ENCODE measurements at regions of chr2 and their contacts with region 1.

Region 1: DNA sequence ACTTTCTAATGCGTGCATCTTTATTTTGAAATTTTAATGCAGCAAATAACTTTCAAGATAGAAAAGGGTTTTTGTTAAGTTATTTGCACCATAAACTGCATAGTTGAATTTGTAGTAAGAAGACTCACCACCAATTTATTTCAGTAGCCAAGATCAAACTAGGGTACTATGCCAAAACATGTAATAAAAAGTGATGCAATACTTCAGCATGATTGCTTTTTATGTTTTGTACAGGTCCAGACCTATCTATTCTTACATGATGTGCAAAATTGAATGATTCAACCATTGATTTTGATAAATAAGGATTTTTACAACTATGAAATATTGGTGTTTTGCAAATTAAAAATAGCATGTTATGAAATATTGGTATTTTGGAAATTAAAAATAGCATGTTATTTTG is 26.7 kb downstream of the AGPS start:
- DNase-seq: peak; percentile 80
- H3K4me3 ChIP-seq: peak overlapping the region in 1 of 3 experiments; percentile 37
- H3K27ac ChIP-seq: no peak overlapping the region
- H3K4me1 ChIP-seq: peaks cover 12% of the 10 kb centered on the region
- H3K27me3 ChIP-seq: no peaks in the 10 kb centered on the region
- CTCF ChIP-seq: no peak

Region 2: DNA sequence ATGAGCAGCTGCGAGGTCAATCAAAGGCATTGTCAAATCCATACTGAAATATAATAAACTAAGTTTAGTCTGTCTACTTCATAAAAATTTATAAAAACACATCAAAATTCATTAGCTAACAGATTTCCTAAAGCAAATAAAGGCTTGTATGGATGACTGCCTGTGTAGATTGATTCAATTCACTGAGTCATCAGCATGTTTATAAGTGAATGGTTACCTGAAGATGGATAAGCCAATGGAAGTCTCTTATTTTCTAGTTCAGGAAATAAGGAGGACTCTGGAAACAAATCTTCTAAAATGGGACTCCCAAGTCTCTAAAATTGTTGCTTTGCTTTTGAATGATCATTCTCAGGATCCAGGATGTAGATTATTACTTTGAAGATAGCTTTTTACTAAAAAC is 263.6 kb before region 1 on chr2:
- CTCF ChIA-PET with region 1: no interaction called
- dilution Hi-C with region 1: loop called (anchors 10 kb)
- in situ Hi-C with region 1: loop called (anchors 10 kb)
- intact Hi-C with region 1: no loop called
- DNase-seq: no peak
- H3K4me3 ChIP-seq: no peak overlapping the region
- H3K27ac ChIP-seq: no peak overlapping the region
- H3K4me1 ChIP-seq: no peaks in the 10 kb centered on the region
- H3K27me3 ChIP-seq: no peaks in the 10 kb centered on the region
- CTCF ChIP-seq: no peak

Region 3: DNA sequence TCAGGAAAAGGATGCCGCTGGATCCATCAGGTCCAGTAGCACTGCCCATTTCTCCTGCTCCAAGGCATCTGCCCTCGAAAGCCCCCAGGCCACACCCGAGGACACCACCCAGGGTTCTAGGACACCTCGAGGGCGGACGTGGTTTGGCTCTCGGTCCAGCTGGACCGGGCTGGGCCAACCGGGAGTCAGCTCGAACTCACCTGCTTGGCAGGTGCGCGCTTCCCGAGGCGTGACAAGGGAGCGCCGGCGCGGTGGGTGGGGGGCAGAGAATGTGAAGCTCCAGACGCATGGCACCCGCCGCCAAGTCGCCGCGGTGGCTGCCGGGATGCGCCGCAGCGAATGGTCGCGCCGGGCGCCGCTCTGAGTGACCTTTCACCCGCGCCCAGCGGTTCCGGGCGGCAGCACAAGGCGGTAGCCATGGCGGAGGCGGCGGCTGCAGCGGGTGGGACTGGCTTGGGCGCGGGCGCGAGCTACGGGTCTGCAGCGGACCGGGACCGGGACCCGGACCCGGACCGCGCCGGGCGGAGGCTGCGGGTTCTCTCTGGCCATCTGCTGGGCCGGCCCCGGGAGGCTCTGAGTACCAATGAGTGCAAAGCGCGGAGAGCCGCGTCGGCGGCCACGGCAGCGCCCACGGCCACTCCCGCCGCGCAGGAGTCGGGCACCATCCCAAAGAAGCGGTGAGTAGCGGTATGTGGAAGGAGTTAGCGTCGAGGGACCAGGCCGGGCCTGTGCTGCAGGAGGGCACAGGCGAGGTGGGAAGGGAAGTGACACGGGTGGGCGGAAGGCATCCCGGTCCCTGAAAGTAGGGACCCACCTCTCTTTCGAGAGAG is 26.7 kb before region 1 on chr2 and contains the start of gene AGPS:
- CTCF ChIA-PET with region 1: no interaction called
- dilution Hi-C with region 1: no loop called
- in situ Hi-C with region 1: no loop called
- intact Hi-C with region 1: loop called (anchors 1 kb)
- DNase-seq: peak; percentile 61
- H3K4me3 ChIP-seq: peak within 1 kb of the TSS; percentile 66 to 73 (median 70)
- H3K27ac ChIP-seq: peak within 1 kb of the TSS; percentile 25
- H3K4me1 ChIP-seq: peaks cover 31% of the 10 kb centered on the region
- H3K27me3 ChIP-seq: no peaks in the 10 kb centered on the region
- CTCF ChIP-seq: peak; percentile 3 to 22
- total RNA-seq, gene AGPS: 42.8 to 52.4 TPM

Region 4: DNA sequence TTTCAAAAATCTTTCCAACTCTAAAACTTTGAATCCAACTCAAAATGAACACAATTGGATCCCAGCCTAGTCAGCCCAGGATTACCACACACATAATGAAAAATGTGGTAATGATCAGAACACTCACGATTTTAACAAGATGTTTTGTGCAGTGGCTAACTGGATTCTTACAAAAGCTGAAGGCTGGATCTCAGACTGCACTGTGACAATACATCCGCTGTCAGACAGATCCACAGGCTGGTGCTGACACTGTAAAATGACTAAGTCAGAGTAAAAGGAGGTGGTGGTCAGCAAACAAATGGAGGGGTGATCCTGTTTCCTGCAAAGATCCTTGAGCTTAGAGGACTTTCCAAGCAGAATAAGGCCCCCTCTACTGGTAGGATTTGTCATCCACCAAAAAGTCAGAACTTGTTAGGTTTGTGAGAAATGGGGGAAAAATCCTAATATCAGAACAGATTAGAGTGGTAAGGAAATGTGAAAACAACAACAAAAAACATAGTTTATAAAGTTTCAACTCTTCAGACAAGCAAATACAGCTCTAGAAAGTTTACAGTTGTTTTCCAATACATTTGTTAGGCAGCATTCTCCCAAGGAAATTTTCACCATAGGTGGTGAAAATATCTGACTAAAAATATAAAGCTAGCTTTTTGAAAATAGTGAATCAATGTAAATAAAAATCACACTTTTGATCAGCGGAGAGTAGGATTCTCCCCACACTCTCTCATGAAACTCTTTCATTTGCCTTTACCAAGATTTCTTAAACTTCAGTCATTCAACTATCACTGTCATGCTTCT is 185.2 kb after region 1 on chr2:
- CTCF ChIA-PET with region 1: no interaction called
- dilution Hi-C with region 1: no loop called
- in situ Hi-C with region 1: no loop called
- intact Hi-C with region 1: loop called (anchors 5 kb)
- DNase-seq: peak; percentile 23
- H3K4me3 ChIP-seq: no peak overlapping the region
- H3K27ac ChIP-seq: no peak overlapping the region
- H3K4me1 ChIP-seq: no peaks in the 10 kb centered on the region
- H3K27me3 ChIP-seq: no peaks in the 10 kb centered on the region
- CTCF ChIP-seq: peak; percentile 62 to 76

Region 5: DNA sequence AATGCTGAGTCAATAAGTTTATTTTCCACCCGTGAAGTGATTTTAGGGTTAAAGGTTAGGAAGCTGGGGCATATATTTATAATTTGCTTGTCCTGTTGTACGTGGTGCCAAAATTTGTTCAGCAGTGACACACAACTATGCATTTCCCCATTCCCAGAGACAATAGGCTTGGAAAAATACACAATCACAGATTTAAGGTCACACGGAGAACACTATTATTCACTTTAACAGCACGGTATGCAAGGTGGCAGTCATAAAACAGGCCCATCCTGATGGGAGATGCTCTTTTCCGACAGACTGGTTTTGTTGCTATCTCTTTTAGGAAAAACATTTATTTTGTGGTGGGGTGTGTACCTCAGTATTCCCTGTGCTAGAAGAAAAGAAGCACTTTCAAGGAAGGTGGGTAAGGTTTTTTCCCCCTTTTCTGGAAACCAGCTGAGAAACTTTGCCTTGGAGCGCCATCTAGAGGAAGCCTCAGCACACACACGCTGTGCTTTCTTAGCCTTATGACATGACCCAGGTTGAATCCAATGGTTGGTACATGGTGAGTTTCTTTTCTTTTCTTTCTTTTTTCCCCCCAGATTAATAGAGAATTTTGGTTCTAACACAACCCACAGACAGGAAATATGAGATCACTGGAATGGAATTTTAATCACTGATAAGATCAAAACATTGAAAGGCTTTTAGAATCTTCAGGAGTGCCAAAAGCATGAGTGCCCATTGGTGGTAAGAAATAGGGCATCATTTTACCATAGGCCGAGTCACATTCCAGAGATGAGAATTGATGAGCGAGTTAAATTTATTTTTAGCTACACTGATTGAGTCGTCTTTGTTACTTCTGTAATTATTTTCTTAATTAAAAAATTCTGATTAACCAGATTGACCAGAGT is 305.4 kb after region 1 on chr2:
- CTCF ChIA-PET with region 1: no interaction called
- dilution Hi-C with region 1: no loop called
- in situ Hi-C with region 1: no loop called
- intact Hi-C with region 1: loop called (anchors 2 kb)
- DNase-seq: peak; percentile 15
- H3K4me3 ChIP-seq: no peak overlapping the region
- H3K27ac ChIP-seq: no peak overlapping the region
- H3K4me1 ChIP-seq: no peaks in the 10 kb centered on the region
- H3K27me3 ChIP-seq: peaks cover 2% of the 10 kb centered on the region
- CTCF ChIP-seq: peak; percentile 91 to 95

Region 6: GRCh38 chr2:177763532-177764265 is 344.4 kb after region 1 on chr2:
- CTCF ChIA-PET with region 1: no interaction called
- dilution Hi-C with region 1: no loop called
- in situ Hi-C with region 1: no loop called
- intact Hi-C with region 1: loop called (anchors 10 kb)
- DNase-seq: peak; percentile 35
- H3K4me3 ChIP-seq: no peak overlapping the region
- H3K27ac ChIP-seq: no peak overlapping the region
- H3K4me1 ChIP-seq: no peaks in the 10 kb centered on the region
- H3K27me3 ChIP-seq: peaks cover 2% of the 10 kb centered on the region
- CTCF ChIP-seq: peak; percentile 69 to 89